GM12878 (cell line): ENCODE measurements at regions of chr2 and their contacts with region 1.

Region 1: GRCh38 chr2:195533771-195534642 is 123.0 kb upstream of the SLC39A10 start:
- DNase-seq: no peak
- ATAC-seq: peak; percentile 42
- H3K4me3 ChIP-seq: no peak overlapping the region
- H3K27ac ChIP-seq: no peak overlapping the region; the same call in 1 of the 2 replicates
- H3K4me1 ChIP-seq: peaks cover 29% of the 10 kb centered on the region
- H3K27me3 ChIP-seq: no peaks in the 10 kb centered on the region
- CTCF ChIP-seq: peak; percentile 23 to 35 (median 30); a peak in 3 of 6 replicates
- EP300 ChIP-seq: no peak
- POLR2A ChIP-seq: no peak
- RAD21 ChIP-seq: peak; percentile 27; the same call in 1 of the 2 replicates

Region 2: DNA sequence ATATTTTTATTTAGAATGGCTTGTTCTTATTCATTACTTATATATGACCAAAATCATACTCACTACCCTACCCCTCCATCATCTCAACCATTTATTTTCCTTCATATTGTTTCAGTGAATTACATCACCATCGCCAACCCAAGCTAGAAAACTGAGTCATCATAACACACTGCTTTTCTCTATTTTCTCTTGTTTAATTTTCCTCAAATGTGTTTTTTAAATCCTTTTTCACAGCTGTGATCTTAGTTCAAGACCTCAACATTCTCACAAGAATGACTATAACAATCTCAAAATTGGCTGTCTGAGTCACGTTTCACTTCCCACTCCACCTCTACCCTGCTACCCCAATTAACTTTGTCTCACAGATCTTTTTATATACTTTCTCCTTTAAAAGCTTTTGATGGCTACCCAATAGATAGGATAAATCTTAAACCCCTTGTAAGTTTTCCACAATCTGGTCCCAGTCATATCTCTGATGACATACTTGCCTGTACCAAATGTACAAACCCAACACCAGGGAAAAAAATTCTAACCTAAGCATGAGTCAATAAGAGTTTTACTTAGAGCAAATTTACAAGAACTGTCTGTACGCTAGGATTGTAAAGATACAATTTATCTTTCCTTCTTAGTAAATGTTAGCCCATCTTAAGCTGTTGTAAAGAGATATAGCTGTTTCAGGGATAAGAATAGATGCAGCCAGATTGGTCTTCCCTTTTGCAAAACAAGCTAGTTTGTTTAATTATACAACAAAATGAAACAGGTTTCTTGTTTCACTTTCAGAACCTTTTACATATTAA is 512.1 kb before region 1 on chr2:
- CTCF ChIA-PET with region 1: no interaction called
- POLR2A ChIA-PET with region 1: no interaction called
- RAD21 ChIA-PET with region 1: no interaction called
- SMC1A ChIA-PET with region 1: no interaction called
- in situ Hi-C with region 1: no loop called
- intact Hi-C with region 1: loop called (anchors 10 kb)
- DNase-seq: peak; percentile 52
- ATAC-seq: peak; percentile 93
- H3K4me3 ChIP-seq: no peak overlapping the region
- H3K27ac ChIP-seq: no peak overlapping the region
- H3K4me1 ChIP-seq: peaks cover 3% of the 10 kb centered on the region; the same call in 1 of the 2 replicates
- H3K27me3 ChIP-seq: no peaks in the 10 kb centered on the region
- CTCF ChIP-seq: no peak
- EP300 ChIP-seq: peak in 1 of 2 experiments; percentile 59; a peak in 1 of 4 replicates
- POLR2A ChIP-seq: no peak
- RAD21 ChIP-seq: no peak

Region 3: DNA sequence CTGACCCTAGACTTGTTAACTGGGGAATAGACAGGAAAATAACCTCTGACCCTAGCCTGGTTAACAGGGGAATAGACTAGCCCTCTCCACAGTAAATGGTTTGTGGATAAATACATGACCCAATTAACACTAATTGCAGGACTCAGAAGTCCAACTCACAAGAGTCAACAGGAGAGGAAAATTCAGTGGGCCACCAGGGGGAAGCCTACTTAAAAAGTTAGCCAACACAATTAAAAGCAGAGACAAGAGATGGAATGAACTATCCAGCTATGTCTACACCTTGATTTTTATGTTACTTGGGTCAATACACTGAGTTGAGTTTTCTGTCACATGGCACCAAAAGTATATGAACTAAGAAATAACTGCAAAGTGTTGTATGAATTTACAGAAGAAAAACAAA is 35.8 kb before region 1 on chr2:
- CTCF ChIA-PET with region 1: interaction called, 99 read pairs
- POLR2A ChIA-PET with region 1: interaction called, 4 read pairs
- RAD21 ChIA-PET with region 1: interaction called, 62 read pairs
- SMC1A ChIA-PET with region 1: interaction called, 57 read pairs
- in situ Hi-C with region 1: no loop called
- intact Hi-C with region 1: no loop called
- DNase-seq: no peak
- ATAC-seq: peak; percentile 78
- H3K4me3 ChIP-seq: no peak overlapping the region
- H3K27ac ChIP-seq: no peak overlapping the region
- H3K4me1 ChIP-seq: no peaks in the 10 kb centered on the region
- H3K27me3 ChIP-seq: no peaks in the 10 kb centered on the region
- CTCF ChIP-seq: peak; percentile 33 to 56 (median 44)
- EP300 ChIP-seq: no peak
- POLR2A ChIP-seq: no peak
- RAD21 ChIP-seq: peak; percentile 70

Region 4: DNA sequence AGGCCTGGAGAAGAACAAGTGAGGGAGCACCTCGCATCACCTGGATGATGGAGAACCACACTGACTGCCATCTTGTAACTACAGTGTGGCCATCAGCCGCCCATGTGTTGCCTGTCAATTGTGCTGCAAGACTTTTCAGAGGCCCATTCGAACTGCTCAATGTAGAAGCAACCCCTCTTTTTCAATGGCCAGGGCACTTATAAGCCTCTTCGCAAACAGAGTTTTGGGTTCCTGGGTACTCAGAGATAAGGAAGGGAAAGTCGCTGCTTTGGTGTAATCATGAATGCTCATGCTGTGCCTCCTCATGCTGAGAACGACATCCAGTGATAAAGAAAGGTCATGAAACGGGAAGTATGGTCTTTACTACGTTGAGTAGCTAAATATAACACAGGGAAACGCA is 20.9 kb before region 1 on chr2:
- CTCF ChIA-PET with region 1: interaction called, 7 read pairs
- POLR2A ChIA-PET with region 1: interaction called, 5 read pairs
- RAD21 ChIA-PET with region 1: interaction called, 62 read pairs
- SMC1A ChIA-PET with region 1: interaction called, 80 read pairs
- in situ Hi-C with region 1: no loop called
- intact Hi-C with region 1: no loop called
- DNase-seq: no peak
- ATAC-seq: no peak
- H3K4me3 ChIP-seq: no peak overlapping the region
- H3K27ac ChIP-seq: no peak overlapping the region
- H3K4me1 ChIP-seq: no peaks in the 10 kb centered on the region
- H3K27me3 ChIP-seq: no peaks in the 10 kb centered on the region
- CTCF ChIP-seq: no peak
- EP300 ChIP-seq: no peak
- POLR2A ChIP-seq: no peak
- RAD21 ChIP-seq: no peak

Region 5: DNA sequence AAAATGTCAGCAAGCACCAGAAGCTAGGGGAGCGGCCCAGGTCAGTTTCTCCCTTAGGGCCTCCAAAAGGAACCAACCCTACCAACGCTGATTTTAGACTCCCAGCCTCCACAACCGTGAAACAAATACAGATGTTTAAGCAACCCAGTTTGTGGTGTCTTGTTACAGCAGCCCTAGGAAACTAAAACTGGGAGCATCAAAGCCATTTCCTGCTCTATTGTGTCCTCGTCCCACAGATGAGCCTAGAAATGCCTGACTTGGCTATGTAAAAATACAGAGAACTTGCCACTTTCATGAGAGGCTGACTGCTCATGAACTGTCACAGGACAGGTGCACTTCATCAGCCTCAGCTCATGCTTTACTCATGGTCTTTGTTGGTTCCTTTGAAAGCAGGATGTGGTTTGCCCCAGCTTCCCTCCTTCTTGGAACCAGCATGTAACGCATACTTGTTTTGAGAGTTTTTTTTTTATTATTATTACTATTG is 25.5 kb after region 1 on chr2:
- CTCF ChIA-PET with region 1: interaction called, 218 read pairs
- POLR2A ChIA-PET with region 1: interaction called, 109 read pairs
- RAD21 ChIA-PET with region 1: interaction called, 282 read pairs
- SMC1A ChIA-PET with region 1: interaction called, 435 read pairs
- in situ Hi-C with region 1: no loop called
- intact Hi-C with region 1: loop called (anchors 1 kb)
- DNase-seq: peak; percentile 99
- ATAC-seq: peak; percentile 72
- H3K4me3 ChIP-seq: 0 out of 2 replicates have a peak overlapping the region, but pooled peaks have one; percentile 6
- H3K27ac ChIP-seq: peak overlapping the region; percentile 94
- H3K4me1 ChIP-seq: peaks cover 39% of the 10 kb centered on the region
- H3K27me3 ChIP-seq: no peaks in the 10 kb centered on the region
- CTCF ChIP-seq: no peak
- EP300 ChIP-seq: peak; percentile 88 to 97
- POLR2A ChIP-seq: no peak
- RAD21 ChIP-seq: 0 out of 2 replicates have a peak, but pooled peaks have one; percentile 15

Region 6: GRCh38 chr2:195575879-195576401 is 41.9 kb after region 1 on chr2:
- CTCF ChIA-PET with region 1: interaction called, 92 read pairs
- POLR2A ChIA-PET with region 1: interaction called, 8 read pairs
- RAD21 ChIA-PET with region 1: interaction called, 98 read pairs
- SMC1A ChIA-PET with region 1: interaction called, 80 read pairs
- in situ Hi-C with region 1: no loop called
- intact Hi-C with region 1: no loop called
- DNase-seq: no peak
- ATAC-seq: peak; percentile 87
- H3K4me3 ChIP-seq: no peak overlapping the region
- H3K27ac ChIP-seq: no peak overlapping the region
- H3K4me1 ChIP-seq: no peaks in the 10 kb centered on the region; the same call in 1 of the 2 replicates
- H3K27me3 ChIP-seq: no peaks in the 10 kb centered on the region
- CTCF ChIP-seq: peak in 2 of 3 experiments; percentile 12 to 60; a peak in 3 of 6 replicates
- EP300 ChIP-seq: no peak
- POLR2A ChIP-seq: no peak
- RAD21 ChIP-seq: peak; percentile 54

Region 7: GRCh38 chr2:195664528-195664927 is 130.5 kb after region 1 on chr2:
- CTCF ChIA-PET with region 1: interaction called, 95 read pairs
- POLR2A ChIA-PET with region 1: interaction called, 12 read pairs
- RAD21 ChIA-PET with region 1: interaction called, 133 read pairs
- SMC1A ChIA-PET with region 1: interaction called, 149 read pairs
- in situ Hi-C with region 1: no loop called
- intact Hi-C with region 1: no loop called
- DNase-seq: no peak
- ATAC-seq: no peak
- H3K4me3 ChIP-seq: no peak overlapping the region
- H3K27ac ChIP-seq: no peak overlapping the region
- H3K4me1 ChIP-seq: no peaks in the 10 kb centered on the region
- H3K27me3 ChIP-seq: no peaks in the 10 kb centered on the region
- CTCF ChIP-seq: no peak; a peak in 1 of 6 replicates
- EP300 ChIP-seq: no peak
- POLR2A ChIP-seq: no peak
- RAD21 ChIP-seq: peak; percentile 45; the same call in 1 of the 2 replicates